HEK293 (cell line): ENCODE measurements at regions of chr20 and their contacts with region 1.

Region 1: DNA sequence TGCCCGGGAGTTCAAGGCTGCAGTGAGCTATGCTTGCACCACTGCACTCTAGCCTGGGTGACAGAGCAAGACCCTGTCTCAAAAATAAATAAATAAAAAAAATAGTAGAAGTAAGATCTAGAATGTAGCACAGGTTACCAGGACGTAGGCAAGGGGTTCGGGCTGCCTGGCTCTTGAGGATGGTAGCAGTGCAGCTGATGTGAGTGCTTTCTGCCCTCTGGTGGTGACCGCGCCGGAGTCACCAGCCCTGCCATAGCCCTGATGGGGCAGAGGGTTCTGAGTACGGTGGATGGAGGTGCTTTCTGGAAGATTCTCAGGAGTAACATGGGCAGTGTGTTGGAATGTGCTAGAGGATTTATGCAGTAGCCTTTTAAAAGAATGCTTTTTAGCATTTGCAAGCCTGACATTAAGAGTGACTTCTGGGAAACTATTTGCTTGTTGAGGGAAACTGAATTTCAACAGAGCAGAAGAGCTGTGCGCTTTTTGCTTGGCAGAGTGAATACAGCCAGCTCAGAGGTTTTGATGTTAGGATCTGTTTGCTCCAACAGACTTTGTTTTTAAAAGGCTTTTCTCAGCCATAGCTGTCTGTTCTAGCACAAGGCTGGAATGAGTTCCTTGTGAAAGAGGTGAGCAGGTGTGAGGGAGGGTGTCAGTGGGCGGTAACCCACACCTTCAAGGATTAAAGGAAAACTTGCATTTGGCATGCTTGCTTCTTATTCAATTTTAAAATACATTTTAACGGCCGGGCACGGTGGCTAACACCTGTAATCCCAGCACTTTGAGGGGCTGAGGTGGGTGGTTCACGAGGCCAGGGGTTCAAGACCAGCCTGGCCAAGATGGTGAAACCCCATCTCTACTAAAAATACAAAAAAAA is 65.9 kb downstream of the PTPN1 start:
- H3K4me3 ChIP-seq: no peak overlapping the region
- H3K27ac ChIP-seq: no peak overlapping the region
- H3K4me1 ChIP-seq: no peaks in the 10 kb centered on the region
- CTCF ChIP-seq: peak; percentile 79

Region 2: GRCh38 chr20:50189681-50190582 is 386.2 kb before region 1 on chr20:
- CTCF ChIA-PET with region 1: interaction called, 16 read pairs
- POLR2A ChIA-PET with region 1: no interaction called
- H3K4me3 ChIP-seq: peak overlapping the region; percentile 61
- H3K27ac ChIP-seq: no peak overlapping the region; the same call in 1 of the 2 replicates
- H3K4me1 ChIP-seq: peaks cover 10% of the 10 kb centered on the region
- CTCF ChIP-seq: peak; percentile 63; the same call in 1 of the 2 replicates

Region 3: GRCh38 chr20:50471204-50471610 is 104.9 kb before region 1 on chr20:
- CTCF ChIA-PET with region 1: interaction called, 12 read pairs
- POLR2A ChIA-PET with region 1: interaction called, 5 read pairs
- H3K4me3 ChIP-seq: no peak overlapping the region
- H3K27ac ChIP-seq: no peak overlapping the region
- H3K4me1 ChIP-seq: no peaks in the 10 kb centered on the region
- CTCF ChIP-seq: no peak

Region 4: DNA sequence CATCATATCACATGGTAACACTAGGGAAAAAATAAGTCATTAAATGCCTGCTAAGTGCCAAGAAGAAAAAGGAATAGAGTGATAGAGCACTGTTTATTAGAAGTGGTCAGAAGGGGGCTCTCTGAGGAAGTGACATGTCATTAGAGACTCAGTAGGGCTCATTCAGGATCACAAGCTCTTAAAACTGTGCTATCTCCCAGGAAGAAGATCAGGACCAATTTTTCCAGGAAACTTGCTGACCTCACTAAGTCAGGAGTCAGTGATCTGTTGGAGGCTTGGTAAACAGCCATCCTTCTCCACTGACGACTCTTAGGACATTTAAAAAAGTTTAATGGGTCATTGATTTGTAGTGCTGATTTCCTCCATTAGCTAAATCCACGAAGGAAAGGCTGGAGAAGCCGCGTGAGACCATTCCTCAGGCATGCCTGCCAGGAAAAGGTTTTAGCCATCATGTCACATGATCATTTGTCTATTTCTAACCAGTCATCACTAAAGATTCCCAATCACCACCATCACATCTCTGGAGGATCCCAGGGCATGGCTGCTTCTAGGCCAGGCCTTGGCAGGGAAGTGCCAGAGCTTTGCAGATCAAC is 71.8 kb before region 1 on chr20:
- CTCF ChIA-PET with region 1: interaction called, 20 read pairs
- POLR2A ChIA-PET with region 1: no interaction called
- H3K4me3 ChIP-seq: no peak overlapping the region
- H3K27ac ChIP-seq: no peak overlapping the region
- H3K4me1 ChIP-seq: no peaks in the 10 kb centered on the region; the same call in 1 of the 2 replicates
- CTCF ChIP-seq: no peak

Region 5: DNA sequence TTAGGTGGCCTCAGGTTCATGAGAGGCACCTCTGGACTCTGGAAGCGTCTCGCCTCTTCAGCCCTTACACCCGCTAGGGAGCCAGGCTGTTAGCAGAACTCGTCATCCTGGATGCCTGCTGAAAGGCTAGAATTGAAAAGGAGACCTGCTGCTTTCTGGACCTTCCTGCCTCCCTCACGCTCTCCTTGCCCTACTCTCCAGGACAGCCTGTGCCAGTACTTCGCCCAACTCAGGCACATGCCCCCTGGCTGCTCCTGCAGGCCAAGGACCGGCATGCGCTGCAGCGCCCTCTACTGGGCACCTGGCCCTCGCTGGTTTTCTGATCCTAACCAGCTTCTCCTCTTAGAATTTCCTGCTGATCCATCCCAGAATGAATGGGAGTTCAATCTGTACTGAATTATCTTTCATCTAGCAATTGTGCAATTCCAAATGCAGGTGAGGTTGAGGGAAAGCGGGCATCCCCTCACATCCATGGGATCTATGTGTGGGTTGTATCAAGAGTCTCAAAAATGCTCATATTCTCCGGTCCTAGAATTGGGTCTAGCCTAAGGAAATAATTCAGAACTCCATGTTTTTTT is 12.0 kb after region 1 on chr20:
- CTCF ChIA-PET with region 1: interaction called, 12 read pairs
- POLR2A ChIA-PET with region 1: no interaction called
- H3K4me3 ChIP-seq: no peak overlapping the region
- H3K27ac ChIP-seq: no peak overlapping the region
- H3K4me1 ChIP-seq: no peaks in the 10 kb centered on the region
- CTCF ChIP-seq: peak; percentile 91

Region 6: GRCh38 chr20:50610221-50610620 is 34.1 kb after region 1 on chr20:
- CTCF ChIA-PET with region 1: no interaction called
- POLR2A ChIA-PET with region 1: no interaction called
- H3K4me3 ChIP-seq: no peak overlapping the region
- H3K27ac ChIP-seq: no peak overlapping the region
- H3K4me1 ChIP-seq: no peaks in the 10 kb centered on the region
- CTCF ChIP-seq: peak; percentile 26; the same call in 1 of the 2 replicates

Region 7: DNA sequence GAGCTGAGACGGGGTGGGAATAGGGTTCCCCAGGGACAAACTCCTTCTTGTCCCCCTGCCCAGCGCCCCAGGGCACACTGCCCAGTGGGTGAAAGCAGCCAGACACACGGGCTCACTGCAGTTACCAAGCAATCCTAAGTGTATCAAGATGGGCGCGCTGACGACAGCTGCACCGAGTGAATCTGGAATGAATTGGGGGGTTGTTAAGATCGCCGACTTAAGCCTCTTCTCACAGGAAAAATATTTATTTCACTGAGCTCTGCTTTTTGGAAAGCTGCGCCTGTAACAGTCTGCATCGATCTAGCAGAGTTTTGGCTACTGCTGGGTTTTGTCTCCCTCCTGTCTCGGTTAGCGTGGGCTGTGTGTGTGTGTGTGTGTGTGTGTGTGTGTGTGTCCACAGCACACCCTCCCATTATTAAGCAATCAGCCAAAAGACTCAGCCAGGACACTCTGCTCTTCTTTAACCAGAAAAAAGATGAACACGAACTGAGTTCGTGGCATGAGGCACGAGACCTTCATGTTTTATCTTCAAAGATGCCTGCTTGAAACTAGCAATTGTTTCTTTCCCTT is 79.3 kb after region 1 on chr20:
- CTCF ChIA-PET with region 1: no interaction called
- POLR2A ChIA-PET with region 1: no interaction called
- H3K4me3 ChIP-seq: no peak overlapping the region
- H3K27ac ChIP-seq: no peak overlapping the region
- H3K4me1 ChIP-seq: no peaks in the 10 kb centered on the region
- CTCF ChIP-seq: no peak

Region 8: GRCh38 chr20:50870561-50871161 is 294.6 kb after region 1 on chr20:
- CTCF ChIA-PET with region 1: no interaction called
- POLR2A ChIA-PET with region 1: no interaction called
- H3K4me3 ChIP-seq: no peak overlapping the region
- H3K27ac ChIP-seq: no peak overlapping the region
- H3K4me1 ChIP-seq: no peaks in the 10 kb centered on the region
- CTCF ChIP-seq: no peak